ENCODE measurements at regions of chr17 and their contacts with region 1.

Region 1: DNA sequence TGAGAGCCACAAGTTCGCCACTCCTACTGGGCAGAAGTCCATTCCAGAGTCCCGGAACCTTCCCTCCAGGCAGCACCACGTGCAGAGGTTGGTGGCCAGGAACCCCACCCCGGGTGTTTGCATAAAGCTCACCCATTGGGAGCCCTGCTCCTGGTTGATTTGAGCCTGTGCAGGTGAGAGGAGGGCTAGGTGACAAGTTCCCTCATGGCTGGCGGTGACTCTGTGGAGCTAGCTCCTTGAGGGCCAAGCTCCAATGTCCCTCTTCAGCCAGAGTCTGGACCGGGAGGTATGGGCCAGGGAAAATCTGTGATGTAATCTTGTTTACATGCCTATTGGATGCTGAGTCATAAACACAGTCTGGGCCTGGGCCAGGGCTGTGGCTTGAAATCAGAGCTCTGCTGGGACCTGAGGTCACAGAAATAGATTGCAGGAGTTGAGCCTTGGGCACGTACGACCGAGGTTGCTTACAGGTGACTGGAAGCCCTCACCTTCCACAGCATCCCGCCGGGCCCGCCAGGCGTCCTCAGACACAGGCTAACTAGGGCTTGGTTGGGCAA is 118.9 kb downstream of the AATF start:
- DNase-seq: peak; percentile 72
- H3K4me3 ChIP-seq: no peak overlapping the region
- H3K27ac ChIP-seq: no peak overlapping the region
- H3K4me1 ChIP-seq: peaks cover 3% of the 10 kb centered on the region
- H3K27me3 ChIP-seq: peaks cover 16 to 26% of the 10 kb centered on the region in 2 experiments
- CTCF ChIP-seq: no peak
- POLR2A ChIP-seq: no peak

Region 2: DNA sequence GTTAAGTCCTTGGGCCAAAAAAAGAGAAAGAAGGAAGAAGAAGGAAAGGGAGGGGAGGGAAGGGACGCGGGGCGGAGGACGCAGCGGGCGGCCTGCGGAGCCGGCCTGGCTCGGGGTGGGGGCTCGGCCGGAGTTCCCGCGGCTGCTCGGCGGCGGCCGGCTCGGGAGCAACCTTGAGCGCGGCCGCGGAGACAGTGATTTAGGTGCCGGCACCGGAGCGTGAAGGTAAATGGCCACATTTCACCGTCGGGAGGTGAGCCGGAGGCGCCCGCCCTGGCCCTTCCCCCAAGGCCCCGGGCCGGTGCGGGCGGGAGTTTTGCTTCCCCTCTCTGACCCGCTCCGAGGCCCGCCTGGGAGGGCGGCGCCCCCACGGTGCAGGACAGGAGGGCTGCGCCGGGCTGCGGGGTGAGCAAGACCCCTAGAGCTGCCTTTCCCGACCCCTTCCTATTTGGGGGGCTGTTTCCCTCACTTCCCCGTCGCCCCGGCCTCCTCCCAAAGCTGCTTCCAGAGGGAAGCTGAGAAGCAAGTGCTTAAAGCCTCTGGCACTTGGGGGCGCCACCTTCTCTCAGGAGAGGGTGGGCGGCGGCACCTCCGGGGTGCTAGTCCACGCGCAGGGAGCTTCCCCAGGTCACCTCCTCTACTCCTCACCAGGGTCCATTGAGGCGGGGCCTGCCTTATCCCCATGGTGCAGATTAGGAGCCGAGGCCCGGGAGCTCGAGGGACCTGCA is 409.7 kb before region 1 on chr17:
- CTCF ChIA-PET with region 1: no interaction called
- POLR2A ChIA-PET with region 1: no interaction called
- dilution Hi-C with region 1: loop called (anchors 25 kb)
- intact Hi-C with region 1: no loop called
- DNase-seq: no peak
- H3K4me3 ChIP-seq: peak overlapping the region in 1 of 3 experiments; percentile 35
- H3K27ac ChIP-seq: no peak overlapping the region
- H3K4me1 ChIP-seq: no peaks in the 10 kb centered on the region
- H3K27me3 ChIP-seq: peaks cover 15 to 20% of the 10 kb centered on the region in 2 experiments
- CTCF ChIP-seq: peak in 1 of 2 donors; percentile 28
- POLR2A ChIP-seq: no peak

Region 3: DNA sequence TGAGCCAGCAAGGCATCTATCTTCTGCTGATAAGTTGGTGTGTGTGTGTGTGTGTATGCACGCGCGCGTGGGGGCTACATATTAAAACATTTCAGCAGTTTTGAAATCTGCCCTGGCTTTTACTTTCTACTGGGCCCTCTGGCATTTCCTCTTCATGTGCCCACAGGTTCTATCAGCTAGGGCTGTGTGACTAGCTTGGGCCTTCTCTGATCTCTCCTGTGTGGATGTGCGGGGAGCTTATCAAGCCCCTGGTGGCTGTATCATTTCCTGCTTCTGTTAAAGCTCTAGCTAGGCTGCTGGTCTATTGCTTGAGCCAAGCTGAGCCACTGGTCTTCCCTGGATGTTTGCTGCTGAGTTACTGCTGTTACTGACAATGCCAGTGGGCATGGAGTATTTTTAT is 13.7 kb after region 1 on chr17:
- CTCF ChIA-PET with region 1: interaction called, 10 read pairs
- POLR2A ChIA-PET with region 1: no interaction called
- dilution Hi-C with region 1: no loop called
- intact Hi-C with region 1: no loop called
- DNase-seq: peak; percentile 39
- H3K4me3 ChIP-seq: no peak overlapping the region
- H3K27ac ChIP-seq: no peak overlapping the region
- H3K4me1 ChIP-seq: peaks cover 5% of the 10 kb centered on the region
- H3K27me3 ChIP-seq: no peaks in the 10 kb centered on the region
- CTCF ChIP-seq: peak; percentile 12 to 24
- POLR2A ChIP-seq: no peak

Region 4: GRCh38 chr17:37092071-37092470 is 24.4 kb after region 1 on chr17:
- CTCF ChIA-PET with region 1: no interaction called
- POLR2A ChIA-PET with region 1: no interaction called
- dilution Hi-C with region 1: no loop called
- intact Hi-C with region 1: no loop called
- DNase-seq: no peak
- H3K4me3 ChIP-seq: no peak overlapping the region
- H3K27ac ChIP-seq: no peak overlapping the region
- H3K4me1 ChIP-seq: peaks cover 10% of the 10 kb centered on the region
- H3K27me3 ChIP-seq: no peaks in the 10 kb centered on the region
- CTCF ChIP-seq: no peak
- POLR2A ChIP-seq: no peak

Measured in endothelial cell of umbilical vein (primary cell).